CD4-positive, alpha-beta memory T cell (primary cell): ENCODE measurements at regions of chr11 and their contacts with region 1.

Region 1: DNA sequence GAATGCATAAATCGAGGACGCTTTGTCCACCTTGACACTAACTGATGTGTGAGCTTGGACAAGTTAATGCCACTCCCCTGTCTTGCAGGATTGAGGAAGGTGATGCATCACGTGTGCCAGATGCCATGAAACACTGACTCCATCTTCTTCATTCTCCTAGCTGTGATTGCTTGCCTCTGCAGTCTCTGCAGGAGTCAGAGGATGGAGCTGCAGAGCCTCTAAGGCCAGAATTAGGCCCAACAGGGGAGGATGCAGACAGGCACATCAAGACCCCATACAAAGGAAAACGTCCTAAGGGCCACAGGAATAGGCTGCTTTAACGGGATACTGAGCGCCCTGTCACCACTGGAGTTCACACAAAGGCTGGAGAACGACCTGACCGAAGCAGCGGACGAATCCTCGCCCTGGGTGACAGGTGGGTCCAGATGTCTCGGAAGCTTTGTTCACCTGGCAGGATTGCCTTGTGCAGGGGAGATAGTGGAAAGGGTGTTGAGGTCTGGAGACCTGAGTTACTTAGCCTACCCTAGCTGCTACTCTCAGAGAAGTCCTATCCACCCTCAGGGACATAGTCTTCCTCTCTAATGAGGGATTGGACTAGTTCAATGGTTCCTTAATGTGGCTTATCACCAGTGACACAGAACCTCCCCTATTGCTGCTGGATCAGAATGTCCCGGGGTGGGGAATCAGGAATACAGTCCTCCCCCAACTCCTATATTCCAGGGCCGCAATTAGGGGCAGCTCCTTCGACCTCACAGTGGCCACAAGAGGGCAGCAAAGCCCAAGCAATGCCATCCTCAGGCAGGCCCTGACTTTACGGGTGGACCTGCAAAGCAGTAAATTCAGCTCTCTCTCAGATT is 32.4 kb downstream of the DBX1 start:
- DNase-seq: peak; percentile 62 to 69 (median 65)
- H3K4me3 ChIP-seq: no peak overlapping the region
- H3K4me3 Mint-ChIP-seq: no peak overlapping the region
- H3K27ac ChIP-seq: no peak overlapping the region
- H3K27ac Mint-ChIP-seq: peak overlapping the region in 1 of 7 donors; percentile 29
- H3K4me1 ChIP-seq: peaks cover 13% of the 10 kb centered on the region
- H3K4me1 Mint-ChIP-seq: peaks cover 6 to 14% (median 8%) of the 10 kb centered on the region in 4 donors
- H3K27me3 ChIP-seq: no peaks in the 10 kb centered on the region
- H3K27me3 Mint-ChIP-seq: peaks cover 2 to 5% of the 10 kb centered on the region in 2 donors

Region 2: GRCh38 chr11:20110908-20111669 is 16.8 kb before region 1 on chr11:
- CTCF ChIA-PET with region 1: interaction called, 79 read pairs
- POLR2A ChIA-PET with region 1: no interaction called
- intact Hi-C with region 1: no loop called
- DNase-seq: peak in 4 of 5 donors; percentile 19 to 33 (median 30)
- H3K4me3 ChIP-seq: no peak overlapping the region
- H3K4me3 Mint-ChIP-seq: no peak overlapping the region
- H3K27ac ChIP-seq: no peak overlapping the region
- H3K27ac Mint-ChIP-seq: no peak overlapping the region
- H3K4me1 ChIP-seq: no peaks in the 10 kb centered on the region
- H3K4me1 Mint-ChIP-seq: peaks cover 0 to 6% (median under 1%) of the 10 kb centered on the region in 4 donors
- H3K27me3 ChIP-seq: no peaks in the 10 kb centered on the region
- H3K27me3 Mint-ChIP-seq: peaks cover 0 to 2% of the 10 kb centered on the region in 2 donors

Region 3: DNA sequence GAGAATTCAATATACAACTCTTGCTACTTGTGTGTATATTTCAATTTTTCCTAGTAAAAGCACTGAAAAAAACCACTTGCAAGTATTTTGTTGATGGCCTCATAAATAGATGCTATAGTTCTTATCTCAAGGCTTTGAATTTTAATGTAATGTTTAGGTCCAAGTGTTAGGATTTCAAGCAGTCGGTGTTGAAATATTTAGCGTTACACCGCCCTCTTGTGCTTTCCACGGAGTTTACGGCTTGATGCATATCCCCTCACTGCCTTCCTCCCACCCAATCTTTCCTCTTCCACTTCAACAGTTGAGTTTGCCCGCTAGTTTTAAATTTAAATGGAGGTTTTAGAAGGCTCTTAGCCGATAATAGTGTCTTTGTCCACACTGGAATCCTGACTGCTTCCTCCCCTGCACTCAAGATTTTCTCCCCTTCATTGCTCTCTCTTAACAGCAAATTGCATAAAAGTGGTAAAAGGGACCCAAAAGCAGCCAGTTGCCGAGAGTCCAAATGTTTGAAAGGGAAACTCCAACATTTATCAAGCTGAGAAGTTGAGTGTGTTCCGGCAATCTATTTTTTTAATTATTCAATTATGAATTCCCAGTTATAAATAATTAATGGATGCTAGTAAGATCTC is 209.7 kb after region 1 on chr11:
- CTCF ChIA-PET with region 1: interaction called, 11 read pairs
- POLR2A ChIA-PET with region 1: no interaction called
- intact Hi-C with region 1: loop called (anchors 5 kb)
- DNase-seq: no peak
- H3K4me3 ChIP-seq: no peak overlapping the region
- H3K4me3 Mint-ChIP-seq: peak overlapping the region in 1 of 8 donors; percentile 35
- H3K27ac ChIP-seq: no peak overlapping the region
- H3K27ac Mint-ChIP-seq: no peak overlapping the region
- H3K4me1 ChIP-seq: no peaks in the 10 kb centered on the region
- H3K4me1 Mint-ChIP-seq: peaks cover 0 to 5% (median 1%) of the 10 kb centered on the region in 4 donors
- H3K27me3 ChIP-seq: peaks cover 12% of the 10 kb centered on the region
- H3K27me3 Mint-ChIP-seq: peaks cover 35 to 43% of the 10 kb centered on the region in 2 donors

Region 4: GRCh38 chr11:20363500-20364411 is 235.9 kb after region 1 on chr11 and contains the start of gene HTATIP2:
- CTCF ChIA-PET with region 1: interaction called, 37 read pairs
- POLR2A ChIA-PET with region 1: interaction called, 4 read pairs
- intact Hi-C with region 1: no loop called
- DNase-seq: peak; percentile 73 to 80 (median 77)
- H3K4me3 ChIP-seq: peak within 1 kb of the TSS; percentile 24 to 78
- H3K4me3 Mint-ChIP-seq: peak within 1 kb of the TSS; percentile 89 to 95 (median 92)
- H3K27ac ChIP-seq: peak within 1 kb of the TSS; percentile 70
- H3K27ac Mint-ChIP-seq: peak within 1 kb of the TSS; percentile 91 to 98 (median 95)
- H3K4me1 ChIP-seq: peaks cover 64% of the 10 kb centered on the region
- H3K4me1 Mint-ChIP-seq: peaks cover 50 to 77% (median 64%) of the 10 kb centered on the region in 4 donors
- H3K27me3 ChIP-seq: no peaks in the 10 kb centered on the region
- H3K27me3 Mint-ChIP-seq: no peaks in the 10 kb centered on the region
- total RNA-seq, gene HTATIP2: 45.3 to 49.9 TPM

Region 5: DNA sequence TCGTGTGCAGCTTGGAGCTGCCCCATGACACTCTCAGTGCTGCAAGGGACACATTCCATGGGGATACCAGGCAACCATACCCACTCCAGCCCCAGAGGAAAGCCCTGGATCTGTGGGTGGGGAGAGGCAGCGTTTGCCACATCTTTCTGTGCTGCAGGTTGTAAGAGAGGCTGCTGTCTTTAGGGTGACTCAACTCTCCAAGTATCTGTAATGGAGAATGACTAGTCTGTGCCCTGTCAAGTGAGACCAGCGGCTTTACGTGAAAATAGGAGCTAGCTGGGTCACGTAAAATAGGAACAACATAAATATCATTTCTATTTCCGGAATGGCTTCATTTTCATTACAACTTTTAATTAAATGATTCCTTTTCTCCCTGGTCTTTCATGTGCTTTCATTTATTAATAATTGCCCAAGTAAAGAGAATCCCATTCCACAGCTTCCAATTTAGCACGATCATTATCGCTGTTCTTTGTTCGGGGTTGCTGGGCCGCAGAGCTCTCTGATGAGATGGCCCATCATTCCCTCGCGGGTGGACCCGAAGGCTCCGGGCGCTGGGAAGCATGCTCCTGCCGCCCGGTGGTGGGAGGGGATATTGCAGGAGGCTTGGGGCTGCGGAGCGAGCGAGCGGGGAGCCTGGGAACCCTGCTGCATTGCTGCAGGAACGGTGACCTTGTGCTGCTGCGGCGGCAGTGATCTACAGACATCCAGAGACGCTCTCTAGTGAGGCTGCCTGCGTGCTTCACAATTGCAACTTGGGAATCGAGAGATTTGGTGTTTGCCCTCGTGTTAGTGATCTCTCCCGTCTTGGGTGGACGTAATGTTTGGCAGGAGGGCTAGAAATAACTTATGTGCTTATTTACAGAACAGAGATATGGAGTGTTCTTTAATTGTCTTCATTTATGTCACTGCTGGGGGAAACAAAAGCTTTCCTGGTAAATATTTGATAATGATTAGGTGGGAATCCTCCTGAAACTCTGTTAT is 482.1 kb after region 1 on chr11:
- CTCF ChIA-PET with region 1: interaction called, 42 read pairs
- POLR2A ChIA-PET with region 1: no interaction called
- intact Hi-C with region 1: loop called (anchors 1 kb)
- DNase-seq: peak in 4 of 5 donors; percentile 19 to 38 (median 32)
- H3K4me3 ChIP-seq: no peak overlapping the region
- H3K4me3 Mint-ChIP-seq: peak overlapping the region in 6 of 8 donors; percentile 37 to 69 (median 56)
- H3K27ac ChIP-seq: no peak overlapping the region
- H3K27ac Mint-ChIP-seq: peak overlapping the region in 1 of 7 donors; percentile 45
- H3K4me1 ChIP-seq: no peaks in the 10 kb centered on the region
- H3K4me1 Mint-ChIP-seq: peaks cover 3 to 8% (median 8%) of the 10 kb centered on the region in 4 donors
- H3K27me3 ChIP-seq: peaks cover 28% of the 10 kb centered on the region
- H3K27me3 Mint-ChIP-seq: peaks cover 42 to 53% of the 10 kb centered on the region in 2 donors

Region 6: DNA sequence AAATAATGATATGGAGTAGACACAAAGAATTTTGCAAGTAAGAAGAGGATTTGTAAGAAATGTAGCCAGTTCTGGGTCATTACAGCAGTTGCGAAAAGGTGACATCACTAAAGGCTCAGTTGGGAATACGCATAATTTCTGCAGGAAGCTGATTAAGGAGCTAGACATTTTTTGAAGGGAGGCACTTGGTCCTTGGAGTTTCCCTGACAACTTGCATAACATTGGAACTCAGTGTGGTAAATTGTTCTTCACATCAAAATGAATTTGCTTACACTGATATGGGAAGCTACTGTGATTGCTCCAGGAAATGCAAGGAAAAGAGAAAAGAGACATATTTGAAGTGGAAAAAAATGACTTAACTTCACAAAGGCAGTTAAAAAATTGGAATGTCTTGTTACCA is 1167.6 kb after region 1 on chr11:
- CTCF ChIA-PET with region 1: no interaction called
- POLR2A ChIA-PET with region 1: no interaction called
- intact Hi-C with region 1: no loop called
- DNase-seq: no peak
- H3K4me3 ChIP-seq: no peak overlapping the region
- H3K4me3 Mint-ChIP-seq: no peak overlapping the region
- H3K27ac ChIP-seq: no peak overlapping the region
- H3K27ac Mint-ChIP-seq: no peak overlapping the region
- H3K4me1 ChIP-seq: no peaks in the 10 kb centered on the region
- H3K4me1 Mint-ChIP-seq: no peaks in the 10 kb centered on the region
- H3K27me3 ChIP-seq: no peaks in the 10 kb centered on the region
- H3K27me3 Mint-ChIP-seq: no peaks in the 10 kb centered on the region